ENCODE measurements at regions of chr5 and their contacts with region 1.

Region 1: DNA sequence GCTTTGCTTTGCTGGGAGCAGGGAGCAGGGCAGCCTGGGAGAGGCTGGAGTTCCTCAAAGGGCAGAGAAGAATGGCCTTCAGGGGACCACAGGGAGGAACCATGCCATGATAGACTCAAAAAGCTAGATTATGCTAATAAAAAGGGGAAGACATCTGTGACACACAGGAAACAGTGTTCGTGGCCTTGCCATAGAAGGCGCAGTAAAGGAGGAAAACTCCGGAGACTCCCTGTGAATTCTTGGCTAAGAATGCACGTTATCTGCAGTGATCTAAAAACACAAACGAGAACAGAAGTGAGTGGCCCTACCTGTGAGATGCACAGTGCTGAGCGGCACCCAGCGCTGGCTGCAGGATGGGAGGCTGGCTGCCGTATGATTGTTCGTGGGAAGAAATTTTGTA is 15.9 kb upstream of the LTC4S start:
- H3K4me3 Mint-ChIP-seq: peak overlapping the region; percentile 51
- H3K27ac Mint-ChIP-seq: peak overlapping the region; percentile 89
- H3K4me1 Mint-ChIP-seq: peaks cover 84% of the 10 kb centered on the region
- H3K27me3 Mint-ChIP-seq: no peaks in the 10 kb centered on the region

Region 2: GRCh38 chr5:179763215-179763945 is 14.5 kb before region 1 on chr5:
- intact Hi-C with region 1: loop called (anchors 2 kb)
- H3K4me3 Mint-ChIP-seq: no peak overlapping the region
- H3K27ac Mint-ChIP-seq: no peak overlapping the region
- H3K4me1 Mint-ChIP-seq: peaks cover 90% of the 10 kb centered on the region
- H3K27me3 Mint-ChIP-seq: no peaks in the 10 kb centered on the region